A673 (cell line): ENCODE measurements at regions of chr20 and their contacts with region 1.

Region 1: GRCh38 chr20:4195499-4195898 is 180.1 kb upstream of the RNF24 start:
- DNase-seq: peak; percentile 59
- H3K4me3 ChIP-seq: no peak overlapping the region
- H3K27ac ChIP-seq: no peak overlapping the region
- H3K4me1 ChIP-seq: no peaks in the 10 kb centered on the region
- H3K27me3 ChIP-seq: no peaks in the 10 kb centered on the region
- CTCF ChIP-seq: peak; percentile 70

Region 2: GRCh38 chr20:3981132-3981452 is 214.4 kb before region 1 on chr20:
- CTCF ChIA-PET with region 1: interaction called, 15 read pairs
- POLR2A ChIA-PET with region 1: no interaction called
- intact Hi-C with region 1: no loop called
- DNase-seq: no peak
- H3K4me3 ChIP-seq: no peak overlapping the region
- H3K27ac ChIP-seq: no peak overlapping the region
- H3K4me1 ChIP-seq: peaks cover 3% of the 10 kb centered on the region
- H3K27me3 ChIP-seq: no peaks in the 10 kb centered on the region
- CTCF ChIP-seq: no peak

Region 3: DNA sequence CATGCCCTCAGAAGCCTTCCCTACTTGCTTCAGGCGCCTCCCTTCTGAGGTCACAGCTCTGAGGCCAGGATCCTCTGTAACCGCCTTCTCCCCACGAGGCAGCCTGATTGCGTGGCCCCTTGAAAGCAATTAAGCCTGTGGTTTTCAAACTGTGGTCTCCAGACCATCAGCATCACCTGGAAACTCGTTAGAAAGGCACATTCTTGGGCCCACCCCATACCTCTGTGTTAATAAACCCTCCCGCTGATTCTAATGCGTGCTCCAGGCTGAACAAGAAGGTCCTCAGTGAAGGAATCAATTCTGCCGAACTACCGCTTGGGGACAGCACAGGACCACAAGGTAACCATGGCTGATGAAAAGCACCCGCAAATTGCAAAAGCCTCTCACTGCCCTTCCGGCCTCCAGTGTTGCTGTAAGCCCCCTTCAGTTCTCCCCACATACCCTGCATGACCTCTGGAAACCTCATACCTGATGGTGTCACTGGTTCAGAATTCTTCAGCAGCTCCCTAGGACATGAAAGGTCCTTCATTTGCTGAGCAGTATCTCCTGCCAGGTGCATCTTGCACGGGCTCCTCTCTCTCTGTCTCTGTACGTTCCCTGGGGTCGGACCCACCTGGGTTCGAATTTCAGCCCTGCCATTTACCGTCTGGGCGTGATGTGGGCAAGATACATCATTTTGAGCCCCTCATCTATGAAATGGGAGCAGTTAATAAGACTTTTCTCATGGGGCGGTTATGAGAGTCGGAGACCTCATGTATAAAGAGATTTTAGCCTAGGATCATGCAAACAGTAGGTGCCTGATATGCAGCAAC is 86.8 kb before region 1 on chr20:
- CTCF ChIA-PET with region 1: no interaction called
- POLR2A ChIA-PET with region 1: no interaction called
- intact Hi-C with region 1: loop called (anchors 1 kb)
- DNase-seq: peak; percentile 88
- H3K4me3 ChIP-seq: no peak overlapping the region
- H3K27ac ChIP-seq: peak overlapping the region; percentile 58
- H3K4me1 ChIP-seq: peaks cover 30% of the 10 kb centered on the region
- H3K27me3 ChIP-seq: no peaks in the 10 kb centered on the region
- CTCF ChIP-seq: peak; percentile 94